Astrocyte of the cerebellum (primary cell): ENCODE measurements at regions of chr2 and their contacts with region 1.

Region 1: GRCh38 chr2:174971865-174972781 is 33.1 kb downstream of the CHN1 start:
- DNase-seq: peak; percentile 49
- H3K4me3 ChIP-seq: no peak overlapping the region
- CTCF ChIP-seq: no peak

Region 2: DNA sequence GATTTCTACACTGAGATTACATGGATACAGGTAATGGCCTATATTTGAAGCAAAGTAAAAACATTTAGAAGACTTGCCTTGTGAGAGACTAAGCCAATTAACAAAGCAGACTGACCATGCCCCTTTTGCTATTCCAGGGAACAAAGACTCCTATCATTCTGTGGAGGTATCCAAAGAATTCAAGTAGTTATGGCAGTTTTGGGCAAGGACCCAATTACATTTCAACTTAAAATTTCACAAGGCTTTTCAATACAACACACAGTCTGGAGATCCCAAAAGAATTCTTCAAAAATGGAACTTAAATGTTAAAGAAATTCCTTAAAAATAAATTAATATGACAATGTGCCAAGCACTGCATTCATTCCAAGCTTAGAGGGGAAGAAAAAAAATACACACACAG is 98.7 kb before region 1 on chr2:
- in situ Hi-C with region 1: loop called (anchors 5 kb)
- DNase-seq: peak; percentile 38
- H3K4me3 ChIP-seq: no peak overlapping the region
- CTCF ChIP-seq: no peak

Region 3: GRCh38 chr2:174925046-174925784 is 46.9 kb before region 1 on chr2:
- in situ Hi-C with region 1: loop called (anchors 5 kb)
- DNase-seq: no peak
- H3K4me3 ChIP-seq: no peak overlapping the region
- CTCF ChIP-seq: no peak